ENCODE measurements at regions of chr10 and their contacts with region 1.

Region 1: GRCh38 chr10:30027057-30028005 is 32.1 kb downstream of the JCAD start:
- DNase-seq: peak; percentile 93
- H3K4me3 Mint-ChIP-seq: peak overlapping the region; percentile 81
- H3K27ac Mint-ChIP-seq: peak overlapping the region; percentile 83
- H3K4me1 Mint-ChIP-seq: peaks cover 35% of the 10 kb centered on the region
- H3K27me3 Mint-ChIP-seq: peaks cover 53% of the 10 kb centered on the region

Region 2: DNA sequence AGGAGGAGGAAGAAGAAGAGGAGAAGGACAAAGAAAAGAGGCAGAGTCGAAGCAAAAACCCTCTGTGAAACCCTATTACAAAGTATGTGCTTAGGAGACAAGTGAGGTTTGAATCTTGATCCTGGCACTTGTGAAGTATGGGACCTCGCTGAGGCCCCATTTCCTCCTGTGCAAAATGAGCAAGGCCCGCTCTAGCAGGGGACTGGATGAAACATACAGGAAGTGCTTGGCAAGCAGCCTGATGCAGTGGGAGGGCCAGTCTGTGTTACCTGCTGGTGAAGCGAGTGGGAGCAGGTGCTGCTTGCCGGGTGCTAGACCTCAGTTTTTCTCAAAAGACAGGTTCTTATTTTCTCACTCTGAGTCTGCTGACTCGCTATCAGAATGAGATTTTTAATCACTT is 118.4 kb before region 1 on chr10:
- CTCF ChIA-PET with region 1: no interaction called
- intact Hi-C with region 1: no loop called
- DNase-seq: peak; percentile 63
- H3K4me3 Mint-ChIP-seq: no peak overlapping the region
- H3K27ac Mint-ChIP-seq: no peak overlapping the region
- H3K4me1 Mint-ChIP-seq: peaks cover 7% of the 10 kb centered on the region
- H3K27me3 Mint-ChIP-seq: peaks cover 13% of the 10 kb centered on the region

Region 3: DNA sequence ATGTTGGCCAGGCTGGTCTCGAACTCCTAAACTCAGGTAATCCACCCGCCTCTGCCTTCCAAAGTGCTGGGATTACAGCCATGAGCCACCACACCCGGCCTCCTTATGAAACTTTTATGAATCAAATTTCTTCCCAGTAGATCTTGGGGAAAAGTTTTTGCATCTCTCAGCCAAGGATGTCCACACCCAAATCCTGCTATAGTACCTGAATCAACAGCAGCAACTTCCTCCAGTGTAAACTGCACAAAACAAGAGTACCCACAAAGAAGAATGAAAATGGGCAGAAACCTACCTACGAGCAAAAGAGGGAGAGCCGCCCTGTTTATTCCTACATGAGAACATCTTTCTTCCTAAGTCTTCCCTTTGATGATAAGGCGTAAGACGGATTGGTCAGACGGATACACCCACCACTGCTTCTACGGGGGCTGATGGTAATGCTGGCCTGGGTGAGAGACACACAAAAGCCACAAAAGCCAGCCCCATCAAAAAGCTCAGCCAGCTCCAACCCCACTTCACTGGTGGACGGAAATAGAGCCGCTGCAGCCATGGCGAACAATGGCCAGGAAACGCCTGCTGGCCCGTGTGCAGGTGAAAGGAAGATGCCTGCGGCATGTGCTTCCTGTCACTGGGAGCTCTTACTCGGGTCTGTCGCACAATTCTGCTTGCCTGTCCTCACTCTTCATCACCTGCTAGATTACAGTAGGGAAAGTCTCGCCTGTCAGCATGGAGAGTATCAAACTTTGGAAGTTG is 21.6 kb after region 1 on chr10:
- CTCF ChIA-PET with region 1: interaction called, 4 read pairs
- intact Hi-C with region 1: loop called (anchors 1 kb)
- DNase-seq: peak; percentile 26
- H3K4me3 Mint-ChIP-seq: peak overlapping the region; percentile 47
- H3K27ac Mint-ChIP-seq: no peak overlapping the region
- H3K4me1 Mint-ChIP-seq: peaks cover 20% of the 10 kb centered on the region
- H3K27me3 Mint-ChIP-seq: peaks cover 61% of the 10 kb centered on the region

Region 4: GRCh38 chr10:30059209-30060107 is 32.1 kb after region 1 on chr10 and contains the start of gene JCAD:
- CTCF ChIA-PET with region 1: no interaction called
- intact Hi-C with region 1: loop called (anchors 2 kb)
- DNase-seq: peak; percentile 51
- H3K4me3 Mint-ChIP-seq: peak within 1 kb of the TSS; percentile 55
- H3K27ac Mint-ChIP-seq: peak within 1 kb of the TSS; percentile 19
- H3K4me1 Mint-ChIP-seq: peaks cover 5% of the 10 kb centered on the region
- H3K27me3 Mint-ChIP-seq: peaks cover 56% of the 10 kb centered on the region
- total RNA-seq, gene JCAD: 0.05 TPM in 1 of 2 experiments, not detected in the other

Region 5: GRCh38 chr10:30348378-30348776 is 321.0 kb after region 1 on chr10:
- CTCF ChIA-PET with region 1: no interaction called
- intact Hi-C with region 1: loop called (anchors 5 kb)
- DNase-seq: no peak
- H3K4me3 Mint-ChIP-seq: peak overlapping the region; percentile 96
- H3K27ac Mint-ChIP-seq: peak overlapping the region; percentile 95
- H3K4me1 Mint-ChIP-seq: peaks cover 41% of the 10 kb centered on the region
- H3K27me3 Mint-ChIP-seq: no peaks in the 10 kb centered on the region

Region 6: GRCh38 chr10:30373596-30374327 is 346.4 kb after region 1 on chr10:
- CTCF ChIA-PET with region 1: no interaction called
- intact Hi-C with region 1: loop called (anchors 1 kb)
- DNase-seq: peak; percentile 77
- H3K4me3 Mint-ChIP-seq: no peak overlapping the region
- H3K27ac Mint-ChIP-seq: peak overlapping the region; percentile 74
- H3K4me1 Mint-ChIP-seq: peaks cover 25% of the 10 kb centered on the region
- H3K27me3 Mint-ChIP-seq: no peaks in the 10 kb centered on the region